ENCODE measurements at regions of chr17 and their contacts with region 1.

Region 1: DNA sequence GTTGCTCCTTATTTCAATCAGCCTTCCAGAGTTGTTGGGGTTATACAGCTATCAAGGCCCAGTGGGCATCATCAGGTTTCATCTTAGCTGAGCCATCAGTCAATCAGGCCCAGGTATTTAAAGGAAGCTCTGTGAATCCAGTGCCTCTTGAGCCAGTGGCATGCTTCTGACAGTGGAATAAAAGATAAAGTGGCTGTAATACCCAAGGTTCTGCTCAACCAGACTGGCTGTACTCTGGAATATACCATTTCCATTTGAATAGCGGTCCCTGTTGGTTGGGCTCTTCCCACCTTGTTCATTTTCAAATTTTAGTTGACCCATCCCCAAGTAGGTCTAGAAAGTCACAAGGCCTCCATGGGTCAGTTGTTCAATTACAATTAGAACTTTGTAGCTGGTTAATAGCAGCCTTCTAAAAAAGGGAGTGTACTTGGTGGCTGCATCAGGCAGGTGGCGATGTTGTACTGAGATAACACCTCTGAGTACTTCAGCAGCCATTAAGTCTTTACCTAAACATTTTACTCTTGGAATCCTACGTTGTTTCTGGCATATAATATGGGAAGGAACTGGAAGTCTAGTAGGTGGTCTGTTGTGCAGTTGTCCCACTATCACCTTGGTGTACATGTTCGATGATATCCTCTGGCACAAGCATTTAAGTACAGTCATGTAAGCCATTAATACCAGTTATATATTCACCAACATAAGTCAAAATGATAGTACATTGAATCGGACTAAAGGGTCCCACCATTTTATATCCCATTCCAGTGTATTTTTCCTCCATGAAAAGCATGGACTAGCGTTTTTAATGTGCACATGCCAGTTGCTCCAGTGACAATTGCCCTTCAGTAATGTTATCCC is 294.1 kb downstream of the BCAS3 start:
- DNase-seq: peak; percentile 65
- ATAC-seq: no peak
- H3K4me3 Mint-ChIP-seq: no peak overlapping the region
- H3K27ac Mint-ChIP-seq: no peak overlapping the region
- H3K4me1 Mint-ChIP-seq: no peaks in the 10 kb centered on the region
- H3K27me3 Mint-ChIP-seq: peaks cover 3% of the 10 kb centered on the region

Region 2: DNA sequence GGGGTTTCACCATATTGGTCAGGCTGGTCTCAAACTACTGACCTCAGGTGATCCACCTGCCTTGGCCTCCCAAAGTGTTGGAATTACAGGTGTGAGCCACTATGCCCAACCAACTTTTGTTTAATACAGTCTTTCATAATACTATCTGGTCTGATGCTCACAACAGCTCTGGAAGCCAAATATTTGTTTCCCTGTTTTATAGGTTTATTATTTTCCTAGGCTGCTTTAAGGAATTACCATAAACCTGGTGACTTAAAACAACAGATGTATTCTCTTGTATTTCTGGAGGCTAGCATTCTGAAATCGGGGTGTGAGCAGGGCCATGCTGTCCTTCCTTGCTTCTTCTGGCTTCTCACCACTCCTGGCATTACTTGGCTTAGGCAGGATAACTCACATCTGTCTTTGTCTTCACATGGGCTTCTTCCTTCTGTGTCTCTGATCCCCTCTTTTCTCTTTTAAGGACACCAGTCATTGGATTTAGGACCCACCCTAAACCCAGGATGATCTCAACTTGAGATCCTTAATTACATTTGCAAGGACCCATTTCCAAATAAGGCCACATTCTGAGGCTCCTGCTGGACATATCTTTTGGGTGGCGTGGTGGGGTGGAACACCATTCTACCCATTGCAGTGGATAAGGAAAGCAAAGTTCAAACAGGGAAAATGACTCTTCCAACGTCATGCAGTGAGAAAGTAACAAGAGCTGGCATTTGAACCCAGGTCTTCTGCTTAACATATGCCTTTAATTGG is 388.6 kb after region 1 on chr17:
- CTCF ChIA-PET with region 1: interaction called, 14 read pairs
- POLR2A ChIA-PET with region 1: no interaction called
- DNase-seq: no peak
- ATAC-seq: no peak
- H3K4me3 Mint-ChIP-seq: no peak overlapping the region
- H3K27ac Mint-ChIP-seq: no peak overlapping the region
- H3K4me1 Mint-ChIP-seq: no peaks in the 10 kb centered on the region
- H3K27me3 Mint-ChIP-seq: peaks cover 2% of the 10 kb centered on the region

Region 3: GRCh38 chr17:61393550-61393903 is 421.8 kb after region 1 on chr17:
- CTCF ChIA-PET with region 1: interaction called, 11 read pairs
- POLR2A ChIA-PET with region 1: no interaction called
- DNase-seq: no peak
- ATAC-seq: no peak
- H3K4me3 Mint-ChIP-seq: no peak overlapping the region
- H3K27ac Mint-ChIP-seq: no peak overlapping the region
- H3K4me1 Mint-ChIP-seq: peaks cover 6% of the 10 kb centered on the region
- H3K27me3 Mint-ChIP-seq: peaks cover 33% of the 10 kb centered on the region

Measured in activated CD8-positive, alpha-beta T cell treated with anti-CD3 and anti-CD28 coated beads, Interleukin-2, amount 10 ng/mL, durations not matched to agents 7 days and 5 days (primary cell).